ENCODE measurements at regions of chr6 and their contacts with region 1.

Region 1: DNA sequence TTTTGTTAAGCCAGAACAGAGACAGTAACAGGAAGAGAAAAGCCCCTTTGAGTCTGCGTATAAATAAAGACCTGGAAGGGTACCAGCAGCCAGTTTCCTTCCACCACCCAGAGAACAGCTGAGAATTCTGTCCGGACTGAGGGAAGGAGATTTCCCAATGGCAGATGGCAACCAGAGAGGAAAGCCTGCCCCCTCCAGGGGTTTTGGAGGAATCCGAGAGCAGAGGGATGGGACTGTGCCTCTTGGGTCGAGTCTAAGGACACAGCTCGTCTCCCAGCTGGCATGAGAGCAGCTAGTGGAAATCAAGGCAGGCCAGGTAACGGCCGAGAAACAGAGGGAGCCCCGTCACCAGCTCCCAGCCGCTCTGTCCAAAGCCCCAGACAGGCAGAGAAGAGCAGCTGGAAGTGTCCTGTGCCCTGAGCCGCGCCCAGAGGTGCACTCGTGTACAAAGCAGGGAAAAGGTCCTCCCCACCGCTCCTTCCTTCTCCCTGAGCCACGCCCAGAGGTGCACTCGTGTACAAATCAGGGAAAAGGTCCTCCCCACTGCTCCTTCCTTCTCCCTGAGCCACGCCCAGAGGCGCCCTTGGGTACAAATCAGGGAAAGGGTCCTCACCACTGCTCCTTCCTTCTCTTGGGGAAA is 134.0 kb upstream of the SNX9 start:
- DNase-seq: no peak
- ATAC-seq: no peak
- H3K4me3 Mint-ChIP-seq: no peak overlapping the region
- H3K27ac Mint-ChIP-seq: no peak overlapping the region
- H3K4me1 Mint-ChIP-seq: no peaks in the 10 kb centered on the region
- H3K27me3 Mint-ChIP-seq: peaks cover 2% of the 10 kb centered on the region

Region 2: GRCh38 chr6:157706883-157707282 is 17.8 kb after region 1 on chr6:
- CTCF ChIA-PET with region 1: no interaction called
- POLR2A ChIA-PET with region 1: no interaction called
- intact Hi-C with region 1: no loop called
- DNase-seq: no peak
- ATAC-seq: no peak
- H3K4me3 Mint-ChIP-seq: no peak overlapping the region
- H3K27ac Mint-ChIP-seq: no peak overlapping the region
- H3K4me1 Mint-ChIP-seq: no peaks in the 10 kb centered on the region
- H3K27me3 Mint-ChIP-seq: no peaks in the 10 kb centered on the region

Region 3: DNA sequence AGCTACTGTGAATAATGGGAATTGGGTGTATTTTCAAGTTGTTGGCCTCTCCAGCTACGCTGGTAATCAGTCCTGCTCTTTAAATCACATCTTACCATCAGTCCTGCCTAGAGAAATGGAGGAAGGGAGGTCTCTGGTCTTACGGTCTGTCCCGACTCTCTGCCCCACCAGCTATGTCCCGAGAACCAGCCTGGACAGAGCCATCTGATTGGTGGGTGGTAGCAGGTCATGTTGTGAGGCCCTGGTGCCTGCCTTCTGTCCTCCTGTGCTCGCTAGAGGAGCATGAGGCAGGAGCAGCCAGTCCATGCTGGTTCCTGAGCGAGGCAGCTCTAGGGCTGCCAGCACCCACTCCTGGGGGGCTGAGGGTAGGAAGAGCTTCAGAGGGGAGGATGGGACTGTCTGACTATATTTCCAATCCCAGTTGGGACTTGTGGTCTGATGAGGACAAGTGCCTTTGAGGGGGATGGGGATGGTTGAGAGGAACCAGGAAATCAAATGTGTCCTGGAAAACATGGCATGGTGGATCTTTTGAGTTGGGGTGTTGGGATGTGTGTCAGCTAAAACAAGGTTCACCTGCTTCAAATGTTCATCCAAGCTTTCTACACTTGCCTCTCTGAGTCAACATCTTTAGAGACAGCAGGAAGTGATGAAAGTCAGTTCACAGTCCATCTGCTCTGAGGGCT is 325.6 kb after region 1 on chr6:
- CTCF ChIA-PET with region 1: no interaction called
- POLR2A ChIA-PET with region 1: no interaction called
- intact Hi-C with region 1: loop called in 1 of 2 experiments (anchors 5 kb)
- DNase-seq: no peak
- ATAC-seq: peak; percentile 79
- H3K4me3 Mint-ChIP-seq: no peak overlapping the region
- H3K27ac Mint-ChIP-seq: peak overlapping the region; percentile 77
- H3K4me1 Mint-ChIP-seq: peaks cover 50% of the 10 kb centered on the region
- H3K27me3 Mint-ChIP-seq: no peaks in the 10 kb centered on the region

Measured in activated CD4-positive, alpha-beta T cell treated with anti-CD3 and anti-CD28 coated beads for 36 hours (primary cell).